ENCODE measurements at regions of chr6 and their contacts with region 1.

Region 1: DNA sequence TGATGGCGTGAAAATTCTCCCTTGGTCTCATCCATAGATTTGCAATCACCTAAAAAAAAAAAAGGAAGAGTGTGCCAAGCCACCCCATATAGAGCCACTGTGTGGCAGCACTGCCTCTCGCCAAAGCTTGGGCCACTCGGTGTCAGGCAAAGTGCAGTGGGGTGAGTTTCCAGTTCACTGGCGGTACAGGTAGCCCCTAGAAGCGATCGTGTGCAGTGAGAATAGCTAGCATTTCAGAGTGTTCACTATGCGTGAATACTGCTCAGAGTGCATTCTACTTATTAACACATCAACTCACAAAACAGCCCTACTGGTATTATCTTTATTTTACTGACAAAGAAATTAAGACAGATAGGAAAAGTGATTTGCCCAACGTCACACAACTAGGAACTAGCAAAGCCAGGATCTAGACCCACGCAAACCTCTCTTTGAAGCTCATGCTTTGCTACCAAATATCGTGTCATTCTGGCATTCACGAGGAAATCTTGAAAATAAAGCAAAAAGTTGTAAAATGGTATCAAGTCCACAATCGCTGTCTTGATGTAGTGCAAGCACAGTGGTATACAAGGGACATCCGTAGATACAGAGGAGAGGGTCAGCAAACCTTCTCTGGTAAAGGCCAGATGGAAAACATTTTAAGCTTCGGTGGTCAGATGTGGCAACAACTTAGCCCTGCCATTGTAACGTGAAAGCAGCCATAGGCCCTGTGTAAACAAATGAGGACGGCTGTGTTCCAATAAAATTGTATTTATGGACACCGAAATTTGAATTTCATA is 10.4 kb upstream of the GCNT2 start:
- ATAC-seq: peak; percentile 80 to 100 (median 98)
- H3K4me3 ChIP-seq: no peak overlapping the region
- H3K27ac ChIP-seq: no peak overlapping the region
- H3K4me1 ChIP-seq: peaks cover 4% of the 10 kb centered on the region in 2 donors

Region 2: DNA sequence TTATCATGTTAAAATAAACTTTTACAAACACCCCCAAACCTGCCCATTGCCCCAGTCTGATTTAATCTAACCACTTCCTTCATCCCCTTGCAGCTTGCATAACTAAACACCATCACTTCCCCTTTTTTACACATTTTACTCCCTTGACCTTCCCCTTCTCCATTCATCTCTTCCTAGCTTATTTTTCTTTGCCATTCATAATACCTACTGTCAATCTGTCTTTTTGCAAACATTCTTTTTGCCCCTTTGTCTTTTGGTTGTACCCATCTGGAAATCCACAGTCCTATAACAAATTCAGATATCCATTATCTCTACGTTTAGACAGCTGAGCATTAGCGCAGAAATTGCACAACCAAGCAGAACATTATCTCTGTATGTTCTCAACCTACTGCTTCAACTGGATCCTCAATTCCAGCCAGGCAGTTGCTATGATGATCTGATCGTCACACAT is 132.4 kb after region 1 on chr6:
- in situ Hi-C with region 1: no loop called
- ATAC-seq: no peak
- H3K4me3 ChIP-seq: no peak overlapping the region
- H3K27ac ChIP-seq: no peak overlapping the region
- H3K4me1 ChIP-seq: no peaks in the 10 kb centered on the region

Region 3: DNA sequence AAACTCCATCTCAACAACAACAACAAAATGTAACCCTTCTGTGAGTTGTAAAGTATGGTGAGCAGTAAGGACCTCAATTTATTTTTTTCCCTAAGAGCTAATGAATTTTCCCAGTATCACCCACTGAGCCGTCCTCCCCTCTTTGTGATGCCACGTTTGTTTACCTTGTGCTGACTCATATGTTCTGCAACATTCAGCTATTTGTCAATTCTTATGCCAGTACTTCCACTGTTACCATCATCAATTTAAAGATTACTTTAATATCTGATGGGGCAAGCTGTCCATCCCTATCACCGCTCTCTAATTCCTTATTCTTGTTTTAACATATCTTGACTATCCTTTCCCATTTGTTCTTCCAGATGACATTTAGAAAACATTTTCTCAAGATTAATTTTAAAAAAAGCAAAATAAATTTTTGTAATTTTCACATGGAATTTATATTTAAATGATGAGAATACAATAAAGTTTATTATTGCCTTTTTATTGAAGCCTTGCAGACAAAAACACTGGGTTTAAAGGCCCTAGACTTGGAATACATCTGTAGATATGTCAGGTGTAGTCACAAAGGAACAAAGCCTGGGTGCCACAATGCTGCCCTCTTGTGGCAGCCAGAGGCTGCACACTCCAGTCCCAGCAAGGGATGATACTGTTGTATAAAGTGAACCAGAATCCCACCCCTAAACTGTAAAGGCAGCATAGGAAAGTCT is 290.2 kb after region 1 on chr6:
- in situ Hi-C with region 1: loop called in 1 of 9 experiments (anchors 25 kb)
- ATAC-seq: peak; percentile 71 to 97 (median 87)
- H3K4me3 ChIP-seq: no peak overlapping the region
- H3K27ac ChIP-seq: no peak overlapping the region
- H3K4me1 ChIP-seq: peaks cover 0 to 2% of the 10 kb centered on the region in 2 donors

Measured in motor neuron (in vitro differentiated cells).